ENCODE measurements at regions of chr16 and their contacts with region 1.

Region 1: GRCh38 chr16:67226804-67227557 is at the start of gene TMEM208:
- DNase-seq: peak; percentile 99
- H3K4me3 ChIP-seq: peak within 1 kb of the TSS; percentile 86 to 99 (median 90)
- H3K27ac ChIP-seq: peak within 1 kb of the TSS; percentile 81 to 85 (median 83)
- H3K4me1 ChIP-seq: peaks cover 0 to 26% (median 21%) of the 10 kb centered on the region in 4 donors
- H3K27me3 ChIP-seq: no peaks in the 10 kb centered on the region
- CTCF ChIP-seq: peak in 1 of 4 experiments; percentile 7
- EP300 ChIP-seq: peak in 1 of 4 donors; percentile 46
- POLR2A ChIP-seq: peak; percentile 73 to 83
- total RNA-seq, gene TMEM208: 15.3 to 31.4 (median 24.2) TPM

Region 2: GRCh38 chr16:67155295-67156142 is 71.5 kb before region 1 on chr16:
- intact Hi-C with region 1: no loop called
- DNase-seq: peak; percentile 85
- H3K4me3 ChIP-seq: peak overlapping the region in 1 of 4 donors; percentile 20
- H3K27ac ChIP-seq: no peak overlapping the region
- H3K4me1 ChIP-seq: peaks cover 0 to 45% (median 41%) of the 10 kb centered on the region in 4 donors
- H3K27me3 ChIP-seq: peaks cover 0 to 18% (median 12%) of the 10 kb centered on the region in 3 donors
- CTCF ChIP-seq: peak; percentile 36 to 97 (median 74)
- EP300 ChIP-seq: no peak
- POLR2A ChIP-seq: no peak

Region 3: DNA sequence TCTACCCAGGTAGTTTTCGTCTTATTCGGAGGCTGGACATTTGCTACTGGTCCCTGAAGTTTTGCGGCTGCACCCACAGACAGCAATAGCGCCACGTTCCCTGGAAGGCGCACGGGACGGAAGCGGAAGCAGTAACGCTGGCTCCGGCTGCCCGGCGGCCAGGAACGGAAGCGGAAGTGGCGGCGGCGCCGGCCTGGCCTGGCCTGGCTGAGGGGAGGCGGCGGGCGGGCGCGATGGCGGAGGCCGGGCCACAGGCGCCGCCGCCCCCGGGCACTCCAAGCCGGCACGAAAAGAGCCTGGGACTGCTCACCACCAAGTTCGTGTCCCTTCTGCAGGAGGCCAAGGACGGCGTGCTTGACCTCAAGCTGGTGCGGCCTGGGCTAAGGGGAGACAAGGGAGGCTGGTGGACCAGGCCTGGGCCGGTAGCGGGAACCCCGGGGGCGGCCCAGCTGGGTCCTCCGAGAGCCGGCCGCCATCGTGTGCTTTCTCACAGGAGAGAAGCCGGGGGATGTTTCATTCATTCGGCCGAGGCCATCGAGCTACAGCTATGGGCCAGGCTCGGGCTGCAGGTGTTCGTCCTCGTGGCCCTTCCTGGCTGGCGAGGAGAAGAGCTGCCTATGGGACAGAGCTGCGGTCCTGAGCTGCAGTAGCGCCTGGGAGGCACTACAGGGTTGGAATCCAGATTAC is 34.8 kb before region 1 on chr16 and contains the start of gene E2F4:
- intact Hi-C with region 1: loop called (anchors 2 kb)
- DNase-seq: peak; percentile 94
- H3K4me3 ChIP-seq: peak within 1 kb of the TSS; percentile 83 to 93 (median 92)
- H3K27ac ChIP-seq: peak within 1 kb of the TSS; percentile 72 to 79 (median 78)
- H3K4me1 ChIP-seq: peaks cover 1 to 27% (median 25%) of the 10 kb centered on the region in 4 donors
- H3K27me3 ChIP-seq: no peaks in the 10 kb centered on the region
- CTCF ChIP-seq: no peak
- EP300 ChIP-seq: peak in 1 of 4 donors; percentile 33
- POLR2A ChIP-seq: no peak
- total RNA-seq, gene E2F4: 59.9 to 85.9 (median 76.0) TPM